WTC11 (cell line): ENCODE measurements at regions of chr19 and their contacts with region 1.

Region 1: DNA sequence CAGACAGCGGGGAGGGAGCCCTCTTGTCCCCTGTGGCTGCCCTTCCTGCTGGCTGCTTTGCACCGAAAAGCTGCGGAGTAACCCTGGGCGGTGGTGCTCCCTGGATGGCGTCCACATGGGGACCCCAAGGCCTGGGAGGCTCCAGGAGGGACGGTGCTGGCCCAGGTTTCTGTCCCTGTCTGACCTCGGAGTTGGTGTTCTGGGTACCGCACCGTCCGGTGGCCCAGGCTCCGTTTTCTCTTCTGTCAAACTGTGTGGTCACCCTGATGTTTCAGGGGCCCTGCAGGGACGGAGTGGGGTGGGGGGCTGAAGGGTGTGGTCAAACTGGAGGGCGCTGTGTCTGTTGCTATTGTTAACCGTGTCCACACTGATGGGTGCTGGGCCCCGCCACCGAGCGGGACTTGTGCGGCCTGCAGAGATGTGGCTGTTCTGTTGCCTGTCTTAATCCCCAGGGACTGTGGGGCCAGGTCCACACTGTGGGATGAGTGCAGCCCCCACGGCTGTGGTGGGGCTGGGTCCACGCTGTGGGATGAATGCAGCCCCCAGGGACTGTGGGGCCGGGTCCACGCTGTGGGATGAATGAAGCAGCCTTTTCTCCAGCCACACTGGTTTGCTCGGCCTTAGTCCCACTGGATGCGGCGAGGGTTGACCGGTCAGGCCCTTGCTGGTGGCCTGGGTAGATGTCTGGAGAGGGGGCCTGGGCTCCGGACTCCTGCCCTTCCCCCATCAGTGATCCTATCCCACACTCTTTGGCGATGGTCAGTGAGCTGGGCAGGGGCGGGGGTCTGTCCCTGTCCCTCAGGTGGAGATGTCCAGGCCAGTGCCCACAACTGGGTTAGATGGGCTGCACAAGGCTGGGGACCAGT is 6.9 kb downstream of the GNA11 start:
- DNase-seq: no peak
- ATAC-seq: no peak
- H3K4me3 Mint-ChIP-seq: no peak overlapping the region
- H3K27ac Mint-ChIP-seq: peak overlapping the region; percentile 45
- H3K4me1 Mint-ChIP-seq: peaks cover 11% of the 10 kb centered on the region
- H3K27me3 Mint-ChIP-seq: no peaks in the 10 kb centered on the region
- CTCF ChIP-seq: no peak

Region 2: GRCh38 chr19:2950286-2951124 is 150.6 kb before region 1 on chr19:
- CTCF ChIA-PET with region 1: interaction called, 60 read pairs
- POLR2A ChIA-PET with region 1: no interaction called
- DNase-seq: peak; percentile 100
- ATAC-seq: peak; percentile 97
- H3K4me3 Mint-ChIP-seq: peak overlapping the region; percentile 97
- H3K27ac Mint-ChIP-seq: peak overlapping the region; percentile 93
- H3K4me1 Mint-ChIP-seq: peaks cover 8% of the 10 kb centered on the region
- H3K27me3 Mint-ChIP-seq: no peaks in the 10 kb centered on the region
- CTCF ChIP-seq: no peak

Region 3: DNA sequence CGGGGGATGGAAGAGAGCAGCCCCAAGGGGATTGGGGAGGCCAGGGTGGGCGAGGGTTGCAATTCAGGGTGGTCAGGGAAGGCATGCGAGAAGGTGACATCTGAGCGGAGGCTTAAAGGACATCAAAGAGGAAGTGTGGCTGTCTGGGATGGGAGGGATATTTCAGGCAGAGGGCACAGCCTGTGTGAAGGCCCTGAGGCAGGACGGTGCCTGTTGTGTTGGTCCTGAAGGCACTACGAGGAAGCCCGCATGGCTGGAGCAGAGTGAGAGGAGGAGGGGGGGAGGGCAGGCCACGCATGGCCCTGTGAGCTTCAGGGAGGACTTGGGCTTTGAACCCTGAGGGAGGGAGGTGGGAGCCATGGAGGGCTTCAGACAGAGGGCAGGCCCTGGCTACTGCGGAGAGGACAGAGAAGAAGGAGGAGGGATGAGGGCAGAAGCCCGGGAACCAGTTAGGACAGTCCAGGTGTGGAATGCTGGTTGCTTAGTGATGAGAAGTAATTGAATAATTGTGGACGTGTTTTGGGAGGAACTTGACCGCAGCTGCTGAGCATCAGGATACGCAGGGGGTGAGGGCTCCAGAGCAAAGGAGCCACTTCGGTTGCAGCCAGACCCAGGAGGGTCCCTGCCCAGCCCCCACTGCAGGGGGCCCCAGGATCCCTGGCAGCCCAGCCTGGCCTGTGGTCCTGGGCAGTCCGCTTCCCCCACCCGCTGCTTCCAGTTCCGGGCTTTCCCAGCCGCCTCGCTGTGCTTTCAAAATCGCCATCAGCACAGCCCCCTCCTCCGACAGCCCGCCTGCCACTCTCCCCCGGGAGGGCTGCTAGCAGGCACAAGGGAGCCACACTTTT is 117.5 kb before region 1 on chr19:
- CTCF ChIA-PET with region 1: interaction called, 10 read pairs
- POLR2A ChIA-PET with region 1: no interaction called
- DNase-seq: peak; percentile 80
- ATAC-seq: peak; percentile 62
- H3K4me3 Mint-ChIP-seq: peak overlapping the region; percentile 41; the same call in 1 of the 2 replicates
- H3K27ac Mint-ChIP-seq: peak overlapping the region; percentile 70; the same call in 1 of the 2 replicates
- H3K4me1 Mint-ChIP-seq: peaks cover 38% of the 10 kb centered on the region
- H3K27me3 Mint-ChIP-seq: peaks cover 48% of the 10 kb centered on the region
- CTCF ChIP-seq: no peak

Region 4: GRCh38 chr19:3029065-3029923 is 71.8 kb before region 1 on chr19 and contains the start of gene TLE2:
- CTCF ChIA-PET with region 1: interaction called, 36 read pairs
- POLR2A ChIA-PET with region 1: no interaction called
- DNase-seq: no peak
- ATAC-seq: no peak
- H3K4me3 Mint-ChIP-seq: peak within 1 kb of the TSS; percentile 63
- H3K27ac Mint-ChIP-seq: no peak within 1 kb of the TSS
- H3K4me1 Mint-ChIP-seq: peaks cover 27% of the 10 kb centered on the region
- H3K27me3 Mint-ChIP-seq: peaks cover 89% of the 10 kb centered on the region
- CTCF ChIP-seq: no peak
- total RNA-seq, gene TLE2: 13.1 to 20.0 TPM (median 15.8 TPM) in 3 replicates

Region 5: GRCh38 chr19:3047425-3048189 is 53.5 kb before region 1 on chr19:
- CTCF ChIA-PET with region 1: interaction called, 18 read pairs
- POLR2A ChIA-PET with region 1: no interaction called
- DNase-seq: peak; percentile 82
- ATAC-seq: peak; percentile 75
- H3K4me3 Mint-ChIP-seq: peak overlapping the region; percentile 82
- H3K27ac Mint-ChIP-seq: peak overlapping the region; percentile 93
- H3K4me1 Mint-ChIP-seq: peaks cover 26% of the 10 kb centered on the region
- H3K27me3 Mint-ChIP-seq: peaks cover 35% of the 10 kb centered on the region
- CTCF ChIP-seq: no peak

Region 6: GRCh38 chr19:3116255-3116602 is 15.1 kb after region 1 on chr19:
- CTCF ChIA-PET with region 1: interaction called, 15 read pairs
- POLR2A ChIA-PET with region 1: no interaction called
- DNase-seq: peak; percentile 38
- ATAC-seq: peak; percentile 65
- H3K4me3 Mint-ChIP-seq: no peak overlapping the region
- H3K27ac Mint-ChIP-seq: no peak overlapping the region
- H3K4me1 Mint-ChIP-seq: peaks cover 6% of the 10 kb centered on the region; the same call in 1 of the 2 replicates
- H3K27me3 Mint-ChIP-seq: no peaks in the 10 kb centered on the region
- CTCF ChIP-seq: no peak

Region 7: DNA sequence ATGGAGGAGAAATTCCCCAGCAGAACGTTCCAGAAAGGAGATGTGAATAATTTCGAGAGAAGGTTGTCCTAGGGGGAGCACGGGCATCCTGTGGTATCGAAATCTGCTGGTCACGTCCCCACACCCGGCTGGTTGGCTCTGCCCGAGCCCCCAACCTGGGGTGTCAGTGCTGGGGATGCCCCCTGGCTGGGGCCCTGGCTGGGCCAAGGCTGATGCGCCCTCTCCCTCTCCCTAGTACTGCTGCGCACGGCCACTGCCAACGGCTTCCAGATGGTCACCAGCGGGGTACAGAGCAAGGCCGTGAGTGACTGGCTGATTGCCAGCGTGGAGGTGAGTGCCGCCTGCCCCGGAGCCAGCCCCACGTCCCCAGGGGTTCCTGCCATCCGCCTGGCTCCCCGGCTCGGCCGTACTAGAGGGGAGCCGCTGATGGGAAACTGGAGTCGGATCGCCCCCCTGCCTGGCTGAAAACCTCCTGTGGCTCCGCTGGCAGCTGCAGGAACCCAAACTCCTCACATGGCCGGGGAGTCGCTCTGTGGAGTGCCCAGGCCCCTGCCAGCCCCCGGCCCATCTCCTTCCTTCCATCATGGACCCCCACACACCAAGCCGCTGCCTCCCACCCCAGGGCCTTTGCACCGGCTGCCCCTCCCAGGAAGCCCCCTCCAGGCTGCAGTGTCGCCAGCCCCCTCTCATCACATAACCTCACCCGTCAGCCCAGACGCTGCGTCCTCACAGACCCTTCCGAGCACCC is 95.0 kb after region 1 on chr19:
- CTCF ChIA-PET with region 1: no interaction called
- POLR2A ChIA-PET with region 1: no interaction called
- DNase-seq: no peak
- ATAC-seq: no peak
- H3K4me3 Mint-ChIP-seq: no peak overlapping the region
- H3K27ac Mint-ChIP-seq: no peak overlapping the region
- H3K4me1 Mint-ChIP-seq: no peaks in the 10 kb centered on the region
- H3K27me3 Mint-ChIP-seq: no peaks in the 10 kb centered on the region
- CTCF ChIP-seq: no peak

Region 8: DNA sequence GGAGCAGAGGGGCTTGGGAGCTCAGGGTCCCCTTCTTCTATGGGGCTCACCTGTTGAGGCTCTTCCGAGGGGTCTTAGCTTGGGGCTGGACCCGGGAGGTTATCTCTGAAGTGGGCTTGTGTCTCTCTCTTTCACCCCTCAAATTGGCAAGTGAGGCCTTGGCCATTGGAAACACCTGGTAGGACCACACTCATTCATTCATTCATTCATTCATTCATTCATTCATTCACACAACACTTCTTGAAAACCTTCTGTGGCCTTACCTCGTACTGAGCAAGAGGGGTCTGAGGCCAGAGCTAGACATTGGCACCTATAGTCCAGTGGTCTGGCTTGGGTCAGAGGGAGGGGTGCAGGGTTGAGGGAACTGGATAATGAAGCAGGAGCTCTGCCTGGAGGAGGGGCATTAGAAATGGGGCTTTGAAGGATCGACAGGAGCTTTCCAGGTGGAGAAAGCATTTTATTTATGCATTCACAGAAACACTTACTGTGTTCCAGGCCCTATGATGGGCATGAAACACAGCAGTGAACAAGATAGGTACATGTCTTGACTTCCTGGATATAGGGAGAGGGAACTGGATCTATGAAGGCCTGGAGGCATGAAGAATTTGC is 128.9 kb after region 1 on chr19:
- CTCF ChIA-PET with region 1: no interaction called
- POLR2A ChIA-PET with region 1: no interaction called
- DNase-seq: no peak
- ATAC-seq: no peak
- H3K4me3 Mint-ChIP-seq: no peak overlapping the region
- H3K27ac Mint-ChIP-seq: no peak overlapping the region
- H3K4me1 Mint-ChIP-seq: peaks cover 8% of the 10 kb centered on the region
- H3K27me3 Mint-ChIP-seq: no peaks in the 10 kb centered on the region
- CTCF ChIP-seq: no peak